Activated T-helper 1 cell treated with anti-CD3 and anti-CD28 coated beads, Interleukin-12 subunit alpha, Interleukin-12 subunit beta, Interleukin-2, Interleukin-4 antibody, amounts not matched to agents 30 ng/mL and 10 ng/mL and 1 ng/mL, durations not matched to agents 14 hours and 24 hours and 36 hours (primary cell): ENCODE measurements at regions of chr10 and their contacts with region 1.

Region 1: DNA sequence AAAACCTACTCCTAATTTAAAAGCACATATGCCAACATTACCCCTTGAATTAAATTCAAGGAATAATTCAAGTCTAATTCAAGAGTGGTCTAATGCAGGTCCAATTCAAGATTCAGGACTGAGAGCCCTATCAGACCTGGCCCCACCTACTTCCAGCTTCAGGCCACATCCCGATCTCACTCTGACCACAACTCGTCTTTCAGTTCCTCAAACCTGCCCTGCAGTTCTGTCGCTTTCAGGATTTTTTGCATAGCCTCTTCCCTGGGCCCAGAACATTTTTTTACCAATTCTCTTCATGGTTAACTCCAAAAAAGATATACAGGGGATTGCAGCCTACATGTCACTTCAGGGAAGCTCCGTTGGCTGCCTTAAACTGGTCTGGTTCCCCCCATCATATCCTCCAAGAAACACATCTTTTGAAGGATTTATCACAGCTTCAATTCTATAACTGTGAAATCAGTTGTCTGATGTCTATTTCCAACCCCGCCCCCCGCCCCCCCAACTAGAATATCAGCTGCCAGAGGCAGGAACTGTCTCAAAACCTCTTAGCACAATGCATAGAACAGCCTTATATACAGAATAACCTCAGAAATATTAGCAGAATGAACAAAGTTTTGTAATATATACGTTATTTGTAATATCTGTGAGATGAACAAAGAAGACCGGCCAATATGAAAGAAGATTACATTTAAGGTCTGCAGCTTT is 20.8 kb downstream of the CCDC6 start:
- DNase-seq: no peak
- H3K4me3 Mint-ChIP-seq: peak overlapping the region; percentile 63
- H3K27ac Mint-ChIP-seq: peak overlapping the region; percentile 94
- H3K4me1 Mint-ChIP-seq: peaks cover 88% of the 10 kb centered on the region
- H3K27me3 Mint-ChIP-seq: no peaks in the 10 kb centered on the region

Region 2: GRCh38 chr10:59830601-59831259 is 54.9 kb before region 1 on chr10:
- intact Hi-C with region 1: loop called (anchors 2 kb)
- DNase-seq: no peak
- H3K4me3 Mint-ChIP-seq: no peak overlapping the region
- H3K27ac Mint-ChIP-seq: no peak overlapping the region
- H3K4me1 Mint-ChIP-seq: peaks cover 72% of the 10 kb centered on the region
- H3K27me3 Mint-ChIP-seq: no peaks in the 10 kb centered on the region

Region 3: DNA sequence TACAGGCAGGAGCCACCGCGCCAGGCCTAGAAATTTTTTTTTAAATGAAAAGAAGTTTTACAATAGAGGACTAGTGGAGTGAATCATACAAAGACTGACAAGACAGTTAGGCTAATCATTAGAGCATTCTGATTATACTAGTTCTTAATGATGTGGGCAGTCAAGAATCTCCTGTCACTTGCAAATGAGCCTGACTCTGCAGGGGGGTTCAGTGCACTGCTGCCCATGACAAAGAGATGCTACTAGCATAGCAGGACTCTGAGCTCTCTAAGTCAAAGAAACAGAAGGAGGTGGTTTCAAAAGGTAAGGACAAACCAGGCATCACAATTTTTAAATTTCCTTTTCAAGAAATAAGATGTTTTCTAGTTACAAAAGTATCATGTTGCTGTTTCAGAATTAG is 38.3 kb before region 1 on chr10:
- intact Hi-C with region 1: no loop called
- DNase-seq: no peak
- H3K4me3 Mint-ChIP-seq: no peak overlapping the region
- H3K27ac Mint-ChIP-seq: no peak overlapping the region
- H3K4me1 Mint-ChIP-seq: peaks cover 28% of the 10 kb centered on the region
- H3K27me3 Mint-ChIP-seq: no peaks in the 10 kb centered on the region

Region 4: DNA sequence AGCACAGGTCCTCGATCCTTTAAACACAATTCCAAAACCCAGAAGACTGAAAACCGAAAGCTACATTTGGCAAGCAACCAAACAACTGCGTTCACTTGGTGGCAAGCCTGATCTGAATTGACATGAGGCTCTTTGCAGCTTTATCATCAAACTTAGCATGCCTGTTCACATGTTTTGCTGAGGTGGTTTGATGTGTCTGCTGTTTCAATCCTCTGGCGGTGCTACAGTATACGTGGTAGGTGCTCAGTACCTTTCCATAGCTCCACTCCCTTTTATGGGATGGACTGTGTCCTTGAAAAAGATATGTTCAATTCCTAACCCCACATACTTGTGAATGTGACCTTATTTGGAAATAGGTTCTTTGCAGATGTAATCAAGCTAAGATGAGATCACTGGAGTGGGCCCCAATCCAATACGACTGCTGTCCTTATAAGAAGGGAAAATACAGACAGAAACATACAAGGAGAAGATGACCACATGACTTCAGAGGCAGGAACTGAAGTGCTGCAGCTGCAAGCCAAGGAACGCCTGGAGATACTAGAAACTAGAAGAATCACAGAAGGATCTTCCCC is 12.6 kb before region 1 on chr10:
- intact Hi-C with region 1: loop called (anchors 2 kb)
- DNase-seq: no peak
- H3K4me3 Mint-ChIP-seq: peak overlapping the region; percentile 46
- H3K27ac Mint-ChIP-seq: peak overlapping the region; percentile 67
- H3K4me1 Mint-ChIP-seq: peaks cover 81% of the 10 kb centered on the region
- H3K27me3 Mint-ChIP-seq: no peaks in the 10 kb centered on the region